IMR-90 (cell line): ENCODE measurements at regions of chr3 and their contacts with region 1.

Region 1: DNA sequence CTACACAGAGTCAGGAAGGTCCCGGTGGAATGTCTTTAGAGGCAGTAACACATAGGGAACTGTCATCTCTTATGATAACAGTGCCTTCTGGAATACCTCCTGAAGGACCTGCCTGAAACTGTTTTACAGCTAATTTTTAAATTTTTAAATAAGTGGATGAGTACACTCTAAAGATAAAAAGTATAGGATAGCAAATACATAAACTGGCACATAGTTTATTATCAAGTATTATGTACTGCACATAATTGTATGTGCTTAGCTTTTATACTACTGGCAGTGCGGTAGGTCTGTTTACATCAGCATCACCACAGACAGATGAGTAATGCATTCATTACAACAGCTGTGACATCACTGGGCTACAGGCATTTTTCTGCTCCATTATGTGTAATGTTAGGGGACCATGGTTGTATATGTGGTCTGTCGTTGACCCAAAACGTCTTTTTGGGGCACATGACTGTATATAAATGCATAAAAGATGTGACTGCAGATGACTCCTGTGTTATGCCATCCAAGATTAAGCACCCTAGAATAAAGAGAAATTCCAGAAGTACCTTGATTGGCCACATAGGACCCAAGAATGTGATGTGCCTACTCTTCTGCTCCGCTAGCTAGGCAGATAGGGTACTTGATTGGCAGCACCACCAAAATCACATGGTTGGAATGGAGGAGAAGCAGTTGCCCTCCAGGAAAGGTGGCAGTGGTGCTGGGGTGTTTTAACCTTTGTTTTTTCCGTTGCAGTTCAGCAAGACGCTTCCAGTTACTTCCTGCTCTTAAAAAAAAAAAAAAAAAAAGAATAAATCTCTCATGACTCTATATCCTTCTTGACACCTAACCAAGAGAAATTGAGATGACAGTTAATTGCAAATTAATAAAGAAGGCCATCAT is 3.3 kb downstream of the VPS8 start:
- DNase-seq: peak; percentile 96
- ATAC-seq: peak; percentile 59
- H3K4me3 ChIP-seq: no peak overlapping the region
- H3K27ac ChIP-seq: no peak overlapping the region
- H3K4me1 ChIP-seq: peaks cover 8% of the 10 kb centered on the region
- H3K27me3 ChIP-seq: no peaks in the 10 kb centered on the region
- CTCF ChIP-seq: no peak
- POLR2A ChIP-seq: no peak
- RAD21 ChIP-seq: no peak

Region 2: DNA sequence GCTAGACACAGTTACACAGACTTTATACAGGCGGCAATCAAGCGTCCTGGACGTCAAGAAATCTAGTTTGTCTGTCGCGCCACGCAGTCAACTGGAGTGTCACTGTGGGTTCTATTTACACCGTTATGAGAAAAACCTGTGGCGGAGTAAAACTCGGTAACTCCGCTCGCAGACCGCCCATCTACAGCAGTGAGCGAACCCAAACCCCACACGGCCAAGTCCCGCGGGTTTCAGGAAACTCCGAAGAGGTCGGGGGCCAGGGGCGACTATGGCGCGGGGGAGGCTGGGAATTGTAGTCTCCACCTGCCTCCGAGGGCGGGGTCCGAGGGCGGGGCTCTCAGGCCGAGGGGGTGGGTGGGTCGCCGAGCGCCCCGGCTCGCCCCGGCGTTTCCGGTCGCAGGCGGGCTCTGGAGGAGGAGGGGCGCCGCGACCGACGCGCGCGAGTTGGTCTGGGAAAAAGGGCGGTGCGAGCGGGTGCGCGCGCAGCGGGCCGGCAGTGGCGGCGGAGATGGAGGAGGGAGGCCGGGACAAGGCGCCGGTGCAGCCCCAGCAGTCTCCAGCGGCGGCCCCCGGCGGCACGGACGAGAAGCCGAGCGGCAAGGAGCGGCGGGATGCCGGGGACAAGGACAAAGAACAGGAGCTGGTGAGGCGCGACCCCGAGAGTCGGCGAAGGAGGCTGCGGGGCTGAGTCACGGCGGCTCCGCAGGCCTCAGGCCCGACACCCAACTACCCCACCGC is 516.4 kb before region 1 on chr3 and contains the start of gene PSMD2:
- CTCF ChIA-PET with region 1: no interaction called
- POLR2A ChIA-PET with region 1: no interaction called
- dilution Hi-C with region 1: no loop called
- in situ Hi-C with region 1: no loop called
- intact Hi-C with region 1: no loop called
- DNase-seq: peak; percentile 93
- ATAC-seq: peak; percentile 98
- H3K4me3 ChIP-seq: peak within 1 kb of the TSS; percentile 96
- H3K27ac ChIP-seq: peak within 1 kb of the TSS; percentile 91
- H3K4me1 ChIP-seq: peaks cover 2% of the 10 kb centered on the region; the same call in 1 of the 2 replicates
- H3K27me3 ChIP-seq: peaks cover 3% of the 10 kb centered on the region; the same call in 1 of the 2 replicates
- CTCF ChIP-seq: no peak
- POLR2A ChIP-seq: peak; percentile 71
- RAD21 ChIP-seq: no peak
- total RNA-seq, gene PSMD2: 697 and 872 TPM in 2 replicates

Region 3: GRCh38 chr3:184800349-184800930 is 14.8 kb before region 1 on chr3:
- CTCF ChIA-PET with region 1: interaction called, 10 read pairs
- POLR2A ChIA-PET with region 1: no interaction called
- dilution Hi-C with region 1: no loop called
- in situ Hi-C with region 1: no loop called
- intact Hi-C with region 1: no loop called
- DNase-seq: no peak
- ATAC-seq: no peak
- H3K4me3 ChIP-seq: no peak overlapping the region
- H3K27ac ChIP-seq: no peak overlapping the region
- H3K4me1 ChIP-seq: 0 out of 2 replicates have a peak, but pooled peaks cover 2% of the 10 kb centered on the region
- H3K27me3 ChIP-seq: peaks cover 2% of the 10 kb centered on the region; the same call in 1 of the 2 replicates
- CTCF ChIP-seq: no peak
- POLR2A ChIP-seq: no peak
- RAD21 ChIP-seq: no peak

Region 4: GRCh38 chr3:184859850-184860249 is 44.6 kb after region 1 on chr3:
- CTCF ChIA-PET with region 1: no interaction called
- POLR2A ChIA-PET with region 1: no interaction called
- dilution Hi-C with region 1: no loop called
- in situ Hi-C with region 1: no loop called
- intact Hi-C with region 1: no loop called
- DNase-seq: no peak
- ATAC-seq: no peak
- H3K4me3 ChIP-seq: no peak overlapping the region
- H3K27ac ChIP-seq: no peak overlapping the region
- H3K4me1 ChIP-seq: no peaks in the 10 kb centered on the region
- H3K27me3 ChIP-seq: no peaks in the 10 kb centered on the region
- CTCF ChIP-seq: no peak
- POLR2A ChIP-seq: no peak
- RAD21 ChIP-seq: no peak

Region 5: GRCh38 chr3:185030399-185030798 is 215.1 kb after region 1 on chr3:
- CTCF ChIA-PET with region 1: no interaction called
- POLR2A ChIA-PET with region 1: no interaction called
- dilution Hi-C with region 1: no loop called
- in situ Hi-C with region 1: no loop called
- intact Hi-C with region 1: no loop called
- DNase-seq: no peak
- ATAC-seq: no peak
- H3K4me3 ChIP-seq: no peak overlapping the region
- H3K27ac ChIP-seq: no peak overlapping the region
- H3K4me1 ChIP-seq: no peaks in the 10 kb centered on the region
- H3K27me3 ChIP-seq: no peaks in the 10 kb centered on the region
- CTCF ChIP-seq: no peak
- POLR2A ChIP-seq: no peak
- RAD21 ChIP-seq: no peak

Region 6: DNA sequence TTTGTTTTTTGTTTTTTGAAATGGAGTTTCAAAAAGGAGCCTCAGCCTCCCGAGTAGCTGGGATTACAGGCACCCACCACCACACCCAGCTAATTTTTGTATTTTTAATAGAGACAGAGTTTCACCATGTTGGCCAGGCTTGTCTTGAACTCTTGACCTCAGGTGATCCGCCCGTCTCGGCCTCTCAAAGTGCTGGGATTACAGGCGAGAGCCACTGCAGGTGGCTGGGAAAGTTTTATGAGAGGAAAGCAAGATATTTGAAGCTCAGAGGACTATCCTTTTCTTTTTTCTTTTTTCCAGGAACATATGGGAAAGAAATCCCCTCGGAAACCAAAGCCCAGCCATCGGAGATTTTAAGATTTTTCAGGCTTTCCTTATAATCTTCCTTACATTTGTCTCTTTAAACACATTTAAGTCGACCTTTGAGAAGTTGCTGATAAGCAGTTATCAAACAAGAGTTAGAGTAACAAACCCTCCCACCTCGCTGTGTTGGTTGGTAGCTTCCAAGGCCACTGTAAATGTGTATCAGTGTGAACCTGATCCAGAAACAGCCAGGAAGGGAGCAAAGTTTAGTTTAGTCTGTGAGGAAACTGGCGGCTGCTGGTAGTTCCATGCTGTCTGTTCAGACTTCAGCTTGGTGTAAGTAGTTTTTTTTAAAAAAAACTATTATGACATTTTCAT is 513.2 kb after region 1 on chr3:
- CTCF ChIA-PET with region 1: no interaction called
- POLR2A ChIA-PET with region 1: no interaction called
- dilution Hi-C with region 1: no loop called
- in situ Hi-C with region 1: no loop called
- intact Hi-C with region 1: no loop called
- DNase-seq: no peak
- ATAC-seq: no peak
- H3K4me3 ChIP-seq: no peak overlapping the region
- H3K27ac ChIP-seq: no peak overlapping the region
- H3K4me1 ChIP-seq: no peaks in the 10 kb centered on the region
- H3K27me3 ChIP-seq: no peaks in the 10 kb centered on the region
- CTCF ChIP-seq: no peak
- POLR2A ChIP-seq: no peak
- RAD21 ChIP-seq: no peak